H1 (cell line): ENCODE measurements at regions of chr11 and their contacts with region 1.

Region 1: DNA sequence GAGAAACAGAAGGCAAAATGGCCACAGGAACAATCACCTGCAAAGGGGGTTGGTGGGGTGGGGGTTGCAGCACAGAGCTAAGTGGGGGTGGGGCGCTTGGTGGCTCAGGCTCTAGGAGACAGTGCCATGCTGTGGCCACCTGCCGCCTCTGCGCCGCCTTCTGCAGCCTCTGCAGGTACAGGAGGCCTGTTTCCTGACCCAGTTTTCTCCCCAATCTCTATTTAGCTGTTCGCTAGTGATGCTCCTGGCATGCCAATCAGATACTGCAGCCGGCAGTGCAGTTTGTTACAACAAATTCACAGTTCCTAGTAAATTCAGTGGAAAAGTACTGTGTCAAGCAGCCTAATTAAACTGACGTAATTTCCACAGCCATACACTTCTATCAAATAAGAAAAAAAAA is 106.4 kb downstream of the SERGEF start:
- DNase-seq: peak; percentile 70 to 73
- H3K4me3 ChIP-seq: peak overlapping the region in 1 of 4 experiments; percentile 20; a peak in 1 of 8 replicates
- H3K27ac ChIP-seq: no peak overlapping the region
- H3K4me1 ChIP-seq: peaks cover 4 to 10% (median 6%) of the 10 kb centered on the region in 4 experiments; a peak in 6 of 7 replicates
- H3K27me3 ChIP-seq: no peaks in the 10 kb centered on the region
- CTCF ChIP-seq: peak; percentile 62 to 86 (median 67)
- EP300 ChIP-seq: no peak
- POLR2A ChIP-seq: no peak
- RAD21 ChIP-seq: peak; percentile 74 to 79

Region 2: GRCh38 chr11:17839973-17840611 is 66.3 kb before region 1 on chr11:
- CTCF ChIA-PET with region 1: interaction called, 12 read pairs
- POLR2A ChIA-PET with region 1: no interaction called
- DNase-seq: no peak
- H3K4me3 ChIP-seq: no peak overlapping the region
- H3K27ac ChIP-seq: no peak overlapping the region
- H3K4me1 ChIP-seq: no peaks in the 10 kb centered on the region
- H3K27me3 ChIP-seq: no peaks in the 10 kb centered on the region
- CTCF ChIP-seq: no peak
- EP300 ChIP-seq: no peak
- POLR2A ChIP-seq: no peak
- RAD21 ChIP-seq: no peak

Region 3: DNA sequence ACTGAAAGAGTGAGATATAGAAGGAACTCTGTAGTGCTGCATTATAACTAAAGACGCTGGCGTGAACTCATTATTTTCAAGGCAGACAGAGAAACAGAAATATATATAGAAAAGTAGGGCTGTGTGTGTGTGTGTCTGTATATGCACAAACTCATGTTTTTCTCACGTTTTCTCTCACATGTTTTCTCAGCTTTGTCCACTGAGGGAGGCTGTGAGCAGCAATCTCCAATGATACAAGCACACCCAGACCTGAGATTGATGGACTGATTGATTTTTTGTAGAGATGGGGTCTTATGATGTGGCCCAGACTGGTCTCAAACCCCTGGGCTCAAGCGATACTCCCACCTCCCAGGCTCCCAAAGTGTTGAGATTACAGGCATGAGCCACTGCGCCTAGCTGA is 16.1 kb before region 1 on chr11:
- CTCF ChIA-PET with region 1: interaction called, 41 read pairs
- POLR2A ChIA-PET with region 1: interaction called, 4 read pairs
- DNase-seq: no peak
- H3K4me3 ChIP-seq: no peak overlapping the region
- H3K27ac ChIP-seq: no peak overlapping the region
- H3K4me1 ChIP-seq: peaks cover 2 to 12% (median 3%) of the 10 kb centered on the region in 4 experiments; a peak in 3 of 7 replicates
- H3K27me3 ChIP-seq: no peaks in the 10 kb centered on the region
- CTCF ChIP-seq: peak in 1 of 3 experiments; percentile 31; a peak in 1 of 4 replicates
- EP300 ChIP-seq: no peak
- POLR2A ChIP-seq: no peak
- RAD21 ChIP-seq: peak; percentile 12 to 26; a peak in 2 of 4 replicates